Mammary epithelial cell (primary cell): ENCODE measurements at regions of chr10 and their contacts with region 1.

Region 1: GRCh38 chr10:33155720-33156638 is 178.5 kb downstream of the NRP1 start:
- DNase-seq: peak; percentile 75
- H3K4me3 ChIP-seq: no peak overlapping the region
- H3K27ac ChIP-seq: peak overlapping the region; percentile 4
- H3K4me1 ChIP-seq: peaks cover 21% of the 10 kb centered on the region
- H3K27me3 ChIP-seq: no peaks in the 10 kb centered on the region
- CTCF ChIP-seq: peak; percentile 86 to 94

Region 2: DNA sequence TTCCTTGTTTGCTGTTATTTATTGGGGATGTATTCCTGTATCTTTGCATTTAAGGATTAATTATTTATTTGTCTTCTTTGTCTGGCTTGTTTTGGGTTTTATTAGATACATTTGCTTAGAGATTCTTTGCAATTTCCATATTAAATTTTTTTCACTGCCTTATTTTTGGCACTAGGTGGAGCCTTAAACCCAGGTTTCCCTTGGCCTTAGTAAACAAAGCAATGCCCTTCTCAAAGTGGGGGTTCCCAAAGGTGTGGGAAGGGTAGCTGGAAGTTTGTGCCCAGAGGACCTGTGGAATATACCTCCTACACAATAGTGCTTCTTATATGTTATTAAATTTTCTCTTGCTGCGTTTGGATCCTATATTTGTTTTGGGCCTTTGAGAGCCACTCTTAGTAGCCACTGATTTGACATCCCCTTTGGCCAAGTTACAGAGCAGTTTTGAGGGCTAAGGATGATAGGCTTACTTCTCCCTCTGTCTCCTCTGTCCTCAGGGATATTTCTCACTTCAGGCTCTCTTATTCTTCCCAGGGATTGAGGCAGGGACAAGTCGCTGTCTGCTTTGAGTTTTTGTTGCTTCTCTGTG is 360.3 kb before region 1 on chr10:
- CTCF ChIA-PET with region 1: no interaction called
- dilution Hi-C with region 1: no loop called
- in situ Hi-C with region 1: loop called in 1 of 2 experiments (anchors 10 kb)
- intact Hi-C with region 1: loop called (anchors 1 kb)
- DNase-seq: peak; percentile 17
- H3K4me3 ChIP-seq: no peak overlapping the region
- H3K27ac ChIP-seq: no peak overlapping the region
- H3K4me1 ChIP-seq: no peaks in the 10 kb centered on the region
- H3K27me3 ChIP-seq: no peaks in the 10 kb centered on the region
- CTCF ChIP-seq: peak; percentile 61 to 71

Region 3: DNA sequence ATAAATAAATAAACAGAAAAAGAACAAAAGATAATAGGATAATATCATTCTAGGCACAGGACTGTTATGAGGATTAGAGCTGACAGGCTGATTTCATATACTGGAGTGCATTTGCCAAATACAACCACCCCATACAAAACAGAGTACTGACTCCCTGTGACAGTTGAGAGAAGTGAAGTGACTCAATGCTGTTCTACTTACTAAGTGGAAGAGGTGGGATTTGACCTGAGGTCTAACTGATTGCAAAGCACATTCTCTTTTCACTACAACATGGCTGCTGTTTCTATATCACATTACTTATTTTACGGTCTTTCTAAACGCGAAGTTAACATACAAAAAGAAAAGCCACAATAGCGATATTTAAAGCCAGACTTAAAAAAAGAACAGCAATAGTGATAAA is 249.4 kb before region 1 on chr10:
- CTCF ChIA-PET with region 1: no interaction called
- dilution Hi-C with region 1: no loop called
- in situ Hi-C with region 1: no loop called
- intact Hi-C with region 1: no loop called
- DNase-seq: no peak
- H3K4me3 ChIP-seq: no peak overlapping the region
- H3K27ac ChIP-seq: no peak overlapping the region
- H3K4me1 ChIP-seq: peaks cover 7% of the 10 kb centered on the region
- H3K27me3 ChIP-seq: no peaks in the 10 kb centered on the region
- CTCF ChIP-seq: no peak

Region 4: DNA sequence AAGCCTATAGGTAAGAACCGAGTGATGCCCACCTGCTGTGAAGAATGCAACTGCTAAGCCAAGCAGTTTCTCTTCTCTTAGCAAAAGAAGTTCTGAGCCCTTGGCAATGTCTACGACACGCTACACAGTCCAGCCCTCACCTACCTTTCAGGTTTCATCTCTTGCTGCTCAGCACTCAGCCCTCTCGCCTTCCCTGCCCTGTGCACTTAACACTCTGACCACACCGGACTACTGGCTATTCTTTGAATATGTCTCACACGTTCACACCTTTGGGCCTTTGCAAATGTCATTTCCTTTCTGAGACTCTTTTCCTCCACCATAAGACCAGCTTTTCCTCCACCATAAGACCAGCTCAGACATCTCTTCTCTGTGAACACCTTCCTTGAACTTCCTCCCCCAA is 130.9 kb before region 1 on chr10:
- CTCF ChIA-PET with region 1: no interaction called
- dilution Hi-C with region 1: no loop called
- in situ Hi-C with region 1: no loop called
- intact Hi-C with region 1: loop called (anchors 5 kb)
- DNase-seq: no peak
- H3K4me3 ChIP-seq: no peak overlapping the region
- H3K27ac ChIP-seq: no peak overlapping the region
- H3K4me1 ChIP-seq: peaks cover 17% of the 10 kb centered on the region
- H3K27me3 ChIP-seq: no peaks in the 10 kb centered on the region
- CTCF ChIP-seq: no peak

Region 5: GRCh38 chr10:33073641-33074415 is 82.2 kb before region 1 on chr10:
- CTCF ChIA-PET with region 1: interaction called, 4 read pairs
- dilution Hi-C with region 1: no loop called
- in situ Hi-C with region 1: no loop called
- intact Hi-C with region 1: loop called (anchors 2 kb)
- DNase-seq: no peak
- H3K4me3 ChIP-seq: no peak overlapping the region
- H3K27ac ChIP-seq: no peak overlapping the region
- H3K4me1 ChIP-seq: no peaks in the 10 kb centered on the region
- H3K27me3 ChIP-seq: no peaks in the 10 kb centered on the region
- CTCF ChIP-seq: peak in 1 of 2 donors; percentile 20

Region 6: GRCh38 chr10:33115738-33116719 is 40.0 kb before region 1 on chr10:
- CTCF ChIA-PET with region 1: no interaction called
- dilution Hi-C with region 1: no loop called
- in situ Hi-C with region 1: no loop called
- intact Hi-C with region 1: loop called (anchors 5 kb)
- DNase-seq: no peak
- H3K4me3 ChIP-seq: no peak overlapping the region
- H3K27ac ChIP-seq: no peak overlapping the region
- H3K4me1 ChIP-seq: peaks cover 32% of the 10 kb centered on the region
- H3K27me3 ChIP-seq: no peaks in the 10 kb centered on the region
- CTCF ChIP-seq: peak; percentile 16 to 47

Region 7: DNA sequence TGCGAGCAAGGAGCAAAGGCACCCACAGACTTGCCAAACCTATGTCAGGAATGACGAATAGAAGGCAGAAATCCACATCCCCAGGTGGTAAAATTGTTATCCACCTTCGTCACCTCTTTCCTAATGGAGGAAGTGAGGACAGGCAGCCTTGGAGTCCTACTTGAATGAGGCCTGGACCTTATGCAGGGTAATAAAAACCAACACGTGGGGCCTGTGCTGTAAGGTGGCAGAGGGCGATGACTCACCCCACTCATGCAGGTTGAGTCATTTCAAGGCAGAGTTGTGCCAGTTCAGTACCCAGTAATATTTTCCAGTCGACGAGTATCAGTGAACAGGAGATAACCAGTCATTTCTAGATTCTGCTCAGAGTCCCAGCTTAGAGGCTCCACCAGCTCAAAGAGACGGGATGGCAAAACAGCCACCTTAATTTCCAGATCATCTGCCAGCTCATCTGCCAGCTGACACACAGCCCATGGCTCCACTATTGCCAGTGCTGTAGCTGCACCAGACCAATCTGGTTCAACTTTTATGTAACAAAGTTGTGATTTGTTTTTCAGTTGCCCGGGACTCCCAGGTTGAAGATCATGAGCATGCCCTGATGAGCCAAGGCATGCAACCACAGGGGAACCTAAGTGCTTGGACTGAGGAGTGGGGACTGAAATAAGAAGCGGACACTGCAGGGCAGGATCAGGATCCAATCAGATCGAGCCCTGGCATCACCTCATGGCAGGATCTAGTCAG is 21.8 kb before region 1 on chr10:
- CTCF ChIA-PET with region 1: no interaction called
- dilution Hi-C with region 1: no loop called
- in situ Hi-C with region 1: no loop called
- intact Hi-C with region 1: loop called (anchors 1 kb)
- DNase-seq: peak; percentile 100
- H3K4me3 ChIP-seq: no peak overlapping the region
- H3K27ac ChIP-seq: peak overlapping the region; percentile 96
- H3K4me1 ChIP-seq: peaks cover 77% of the 10 kb centered on the region
- H3K27me3 ChIP-seq: no peaks in the 10 kb centered on the region
- CTCF ChIP-seq: no peak

Region 8: GRCh38 chr10:33211106-33211878 is 55.3 kb after region 1 on chr10:
- CTCF ChIA-PET with region 1: no interaction called
- dilution Hi-C with region 1: no loop called
- in situ Hi-C with region 1: no loop called
- intact Hi-C with region 1: no loop called
- DNase-seq: no peak
- H3K4me3 ChIP-seq: no peak overlapping the region
- H3K27ac ChIP-seq: no peak overlapping the region
- H3K4me1 ChIP-seq: peaks cover 7% of the 10 kb centered on the region
- H3K27me3 ChIP-seq: no peaks in the 10 kb centered on the region
- CTCF ChIP-seq: no peak

Region 9: DNA sequence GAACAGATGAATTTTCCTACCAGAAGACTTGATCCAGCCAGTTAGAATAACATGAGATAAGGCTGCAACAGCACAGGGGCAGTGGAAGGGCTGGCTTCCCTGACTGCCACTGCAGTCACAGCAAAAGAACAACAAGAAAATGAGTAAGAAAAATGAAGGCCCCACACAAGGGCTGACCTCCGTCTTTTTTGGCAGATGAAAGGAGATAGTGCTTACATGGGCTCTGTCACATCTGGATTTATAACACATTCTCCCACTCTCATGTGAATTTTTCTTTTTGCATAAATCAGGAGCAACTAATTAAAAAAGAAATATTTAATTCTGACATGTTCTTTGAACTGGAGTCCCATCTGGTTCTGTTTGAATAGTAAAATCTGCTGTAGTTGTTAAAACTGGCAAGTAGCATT is 78.9 kb after region 1 on chr10:
- CTCF ChIA-PET with region 1: no interaction called
- dilution Hi-C with region 1: no loop called
- in situ Hi-C with region 1: no loop called
- intact Hi-C with region 1: no loop called
- DNase-seq: no peak
- H3K4me3 ChIP-seq: no peak overlapping the region
- H3K27ac ChIP-seq: no peak overlapping the region
- H3K4me1 ChIP-seq: peaks cover 29% of the 10 kb centered on the region
- H3K27me3 ChIP-seq: no peaks in the 10 kb centered on the region
- CTCF ChIP-seq: no peak